GM12878 (cell line): ENCODE measurements at regions of chr10 and their contacts with region 1.

Region 1: GRCh38 chr10:11611248-11612020 is at the start of gene USP6NL:
- DNase-seq: no peak
- ATAC-seq: peak; percentile 54
- H3K4me3 ChIP-seq: peak within 1 kb of the TSS; percentile 98
- H3K27ac ChIP-seq: peak within 1 kb of the TSS; percentile 91
- H3K4me1 ChIP-seq: peaks cover 10% of the 10 kb centered on the region
- H3K27me3 ChIP-seq: no peaks in the 10 kb centered on the region
- CTCF ChIP-seq: no peak
- EP300 ChIP-seq: peak in 1 of 2 experiments; percentile 36; a peak in 1 of 4 replicates
- POLR2A ChIP-seq: peak; percentile 74
- RAD21 ChIP-seq: no peak
- polyA plus RNA-seq, gene USP6NL: 4.0 to 6.5 TPM

Region 2: DNA sequence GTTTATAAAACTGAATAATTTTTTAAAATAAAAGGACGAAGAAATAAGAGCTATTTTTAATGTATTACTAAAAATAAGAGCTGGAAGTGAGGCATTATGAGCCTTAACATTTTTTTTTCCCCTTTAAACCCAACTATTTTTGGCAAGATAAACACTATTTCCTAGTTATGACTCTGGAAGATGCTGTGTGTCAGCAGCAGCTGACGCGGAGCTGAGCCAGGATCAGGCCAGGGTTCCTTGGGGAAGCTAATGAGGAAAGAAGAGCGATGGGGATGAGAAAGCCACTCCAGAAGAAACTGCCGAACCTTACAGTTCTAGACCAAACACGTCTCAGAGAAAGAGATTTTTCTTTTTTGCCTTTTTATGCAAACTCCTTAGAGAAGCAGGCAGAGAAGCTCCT is 85.9 kb before region 1 on chr10:
- CTCF ChIA-PET with region 1: interaction called, 3 read pairs
- POLR2A ChIA-PET with region 1: no interaction called
- RAD21 ChIA-PET with region 1: interaction called, 24 read pairs
- SMC1A ChIA-PET with region 1: interaction called, 14 read pairs
- in situ Hi-C with region 1: no loop called
- intact Hi-C with region 1: no loop called
- DNase-seq: no peak
- ATAC-seq: no peak
- H3K4me3 ChIP-seq: no peak overlapping the region
- H3K27ac ChIP-seq: no peak overlapping the region
- H3K4me1 ChIP-seq: peaks cover 14% of the 10 kb centered on the region
- H3K27me3 ChIP-seq: no peaks in the 10 kb centered on the region
- CTCF ChIP-seq: no peak
- EP300 ChIP-seq: no peak
- POLR2A ChIP-seq: no peak
- RAD21 ChIP-seq: no peak

Region 3: DNA sequence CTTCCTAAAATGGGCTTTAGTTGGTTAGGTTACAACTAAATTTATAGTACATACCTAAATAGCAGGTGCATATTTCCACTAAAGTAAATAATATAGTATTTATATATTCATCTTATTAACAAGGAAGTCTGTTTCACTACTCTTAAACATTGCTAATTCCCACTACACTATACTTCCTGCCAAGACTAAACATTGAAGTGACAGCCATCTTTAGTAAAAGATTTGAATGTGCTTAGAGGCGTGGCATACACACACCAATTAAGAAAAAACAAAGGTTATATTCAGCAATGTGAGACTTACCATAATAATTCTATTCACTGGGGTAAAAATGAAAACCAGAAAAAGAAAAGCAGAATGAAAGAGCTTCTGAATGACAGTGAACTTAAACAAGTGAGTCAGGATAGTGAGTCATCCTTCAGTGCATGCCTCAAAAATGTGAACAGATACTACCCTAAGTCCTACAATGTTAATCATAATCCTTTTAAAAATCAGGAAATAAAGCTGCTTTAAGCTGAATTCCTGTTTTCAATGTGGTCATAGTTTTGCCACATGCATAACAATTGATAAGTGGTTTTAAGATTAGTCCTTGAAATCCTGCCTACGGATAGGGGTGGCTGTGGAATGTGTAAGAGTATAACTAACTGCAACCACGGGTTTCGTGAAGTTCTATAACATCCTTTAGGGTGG is 59.4 kb before region 1 on chr10:
- CTCF ChIA-PET with region 1: interaction called, 10 read pairs
- POLR2A ChIA-PET with region 1: interaction called, 3 read pairs
- RAD21 ChIA-PET with region 1: interaction called, 30 read pairs
- SMC1A ChIA-PET with region 1: interaction called, 25 read pairs
- in situ Hi-C with region 1: no loop called
- intact Hi-C with region 1: loop called (anchors 2 kb)
- DNase-seq: no peak
- ATAC-seq: peak; percentile 44
- H3K4me3 ChIP-seq: no peak overlapping the region
- H3K27ac ChIP-seq: peak overlapping the region; percentile 45; the same call in 1 of the 2 replicates
- H3K4me1 ChIP-seq: peaks cover 58% of the 10 kb centered on the region
- H3K27me3 ChIP-seq: no peaks in the 10 kb centered on the region
- CTCF ChIP-seq: no peak
- EP300 ChIP-seq: no peak
- POLR2A ChIP-seq: no peak
- RAD21 ChIP-seq: no peak

Region 4: GRCh38 chr10:11595395-11595692 is 16.1 kb before region 1 on chr10:
- CTCF ChIA-PET with region 1: interaction called, 9 read pairs
- POLR2A ChIA-PET with region 1: interaction called, 4 read pairs
- RAD21 ChIA-PET with region 1: interaction called, 6 read pairs
- SMC1A ChIA-PET with region 1: interaction called, 36 read pairs
- in situ Hi-C with region 1: no loop called
- intact Hi-C with region 1: no loop called
- DNase-seq: no peak
- ATAC-seq: peak; percentile 67
- H3K4me3 ChIP-seq: peak overlapping the region; percentile 5; the same call in 1 of the 2 replicates
- H3K27ac ChIP-seq: peak overlapping the region; percentile 34
- H3K4me1 ChIP-seq: peaks cover 18% of the 10 kb centered on the region
- H3K27me3 ChIP-seq: no peaks in the 10 kb centered on the region
- CTCF ChIP-seq: no peak
- EP300 ChIP-seq: no peak
- POLR2A ChIP-seq: no peak
- RAD21 ChIP-seq: no peak

Region 5: GRCh38 chr10:11678074-11678793 is 66.8 kb after region 1 on chr10:
- CTCF ChIA-PET with region 1: interaction called, 8 read pairs
- POLR2A ChIA-PET with region 1: interaction called, 12 read pairs
- RAD21 ChIA-PET with region 1: interaction called, 5 read pairs
- SMC1A ChIA-PET with region 1: interaction called, 57 read pairs
- in situ Hi-C with region 1: no loop called
- intact Hi-C with region 1: loop called (anchors 1 kb)
- DNase-seq: peak; percentile 98
- ATAC-seq: peak; percentile 93
- H3K4me3 ChIP-seq: peak overlapping the region; percentile 48; the same call in 1 of the 2 replicates
- H3K27ac ChIP-seq: peak overlapping the region; percentile 92
- H3K4me1 ChIP-seq: peaks cover 63% of the 10 kb centered on the region
- H3K27me3 ChIP-seq: no peaks in the 10 kb centered on the region
- CTCF ChIP-seq: no peak
- EP300 ChIP-seq: peak; percentile 88 to 94
- POLR2A ChIP-seq: no peak
- RAD21 ChIP-seq: peak; percentile 40

Region 6: DNA sequence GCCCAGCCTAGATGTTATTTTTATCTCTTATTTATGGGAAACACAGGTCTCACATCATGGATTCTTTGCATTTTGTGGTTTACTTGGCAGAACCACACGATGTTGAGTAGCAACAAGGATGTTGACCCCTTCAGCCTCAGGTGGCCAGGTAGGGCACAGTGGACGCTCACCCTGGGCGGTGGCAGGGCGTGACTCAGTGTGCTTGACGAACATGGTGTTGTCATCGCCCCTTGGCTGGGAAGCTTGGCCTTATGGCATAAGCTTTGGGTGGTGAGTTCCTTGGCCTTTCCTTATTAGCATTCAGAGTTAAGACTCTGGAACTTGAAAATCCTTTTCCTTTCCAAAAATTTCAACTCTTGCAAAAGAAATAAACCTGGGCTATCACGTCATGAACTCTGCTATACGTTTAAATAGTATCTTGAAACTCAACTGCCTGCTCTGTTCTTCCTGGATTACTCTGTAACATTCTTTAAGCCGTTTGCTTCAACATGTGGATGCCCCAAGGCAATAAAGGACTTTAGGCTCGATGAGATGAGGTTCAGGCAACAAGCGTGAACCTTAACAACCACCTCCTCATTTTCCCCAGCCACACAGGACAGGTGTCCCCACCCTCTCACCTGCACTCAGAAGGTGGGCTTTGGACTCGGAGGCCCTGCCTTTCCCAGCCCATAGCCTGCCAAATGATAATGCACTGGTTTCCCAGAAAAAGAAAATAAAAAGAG is 108.2 kb after region 1 on chr10:
- CTCF ChIA-PET with region 1: interaction called, 5 read pairs
- POLR2A ChIA-PET with region 1: no interaction called
- RAD21 ChIA-PET with region 1: interaction called, 9 read pairs
- SMC1A ChIA-PET with region 1: interaction called, 13 read pairs
- in situ Hi-C with region 1: no loop called
- intact Hi-C with region 1: loop called (anchors 2 kb)
- DNase-seq: no peak
- ATAC-seq: no peak
- H3K4me3 ChIP-seq: no peak overlapping the region
- H3K27ac ChIP-seq: no peak overlapping the region
- H3K4me1 ChIP-seq: peaks cover 19% of the 10 kb centered on the region
- H3K27me3 ChIP-seq: no peaks in the 10 kb centered on the region; a peak in 1 of 4 replicates
- CTCF ChIP-seq: no peak
- EP300 ChIP-seq: no peak
- POLR2A ChIP-seq: no peak
- RAD21 ChIP-seq: no peak

Region 7: DNA sequence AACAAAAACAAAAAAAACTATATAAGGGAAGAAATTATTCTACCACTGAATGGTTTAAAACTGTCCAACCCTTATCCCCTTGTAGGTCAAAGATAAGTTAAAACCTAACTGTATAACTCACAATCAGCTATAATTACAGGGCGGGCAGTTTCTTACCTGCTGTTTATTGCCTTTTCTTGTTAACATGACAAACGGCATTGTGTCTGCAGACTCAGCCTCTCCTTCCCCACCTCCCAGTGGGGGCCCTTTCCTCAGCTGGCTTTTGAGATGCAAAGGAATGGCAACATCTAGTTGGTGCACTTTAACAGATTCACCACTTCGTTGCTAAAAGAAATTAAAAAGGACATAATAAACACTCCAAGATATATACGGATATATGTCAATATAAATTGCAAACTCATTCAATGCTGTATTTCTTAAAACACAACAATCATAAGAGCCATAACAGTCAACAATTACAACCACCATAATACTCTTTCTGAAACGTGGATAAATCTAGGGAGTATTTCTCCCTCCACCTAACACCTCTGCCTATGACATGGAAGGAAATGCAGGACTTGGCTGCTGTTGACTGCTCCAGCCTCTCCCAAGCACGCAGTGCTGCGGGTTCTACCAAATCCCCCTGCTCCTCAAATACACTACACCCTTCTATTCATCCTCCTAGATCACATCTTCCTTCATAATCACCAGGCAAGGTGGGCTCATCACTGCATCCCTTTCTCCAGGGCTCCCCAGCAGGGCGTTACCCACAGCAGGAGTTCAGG is 325.1 kb after region 1 on chr10:
- CTCF ChIA-PET with region 1: no interaction called
- POLR2A ChIA-PET with region 1: no interaction called
- RAD21 ChIA-PET with region 1: no interaction called
- SMC1A ChIA-PET with region 1: no interaction called
- in situ Hi-C with region 1: no loop called
- intact Hi-C with region 1: no loop called
- DNase-seq: no peak
- ATAC-seq: no peak
- H3K4me3 ChIP-seq: no peak overlapping the region
- H3K27ac ChIP-seq: no peak overlapping the region
- H3K4me1 ChIP-seq: no peaks in the 10 kb centered on the region
- H3K27me3 ChIP-seq: no peaks in the 10 kb centered on the region
- CTCF ChIP-seq: no peak
- EP300 ChIP-seq: no peak
- POLR2A ChIP-seq: 0 out of 2 replicates have a peak, but pooled peaks have one; percentile 29
- RAD21 ChIP-seq: no peak